Calu3 (cell line): ENCODE measurements at regions of chr9 and their contacts with region 1.

Region 1: GRCh38 chr9:105425841-105426436 is 21.9 kb upstream of the FSD1L start:
- DNase-seq: no peak
- H3K4me3 Mint-ChIP-seq: no peak overlapping the region
- H3K27ac Mint-ChIP-seq: no peak overlapping the region
- H3K4me1 Mint-ChIP-seq: no peaks in the 10 kb centered on the region
- H3K27me3 Mint-ChIP-seq: no peaks in the 10 kb centered on the region
- CTCF ChIP-seq: no peak

Region 2: GRCh38 chr9:105475302-105475701 is 49.4 kb after region 1 on chr9:
- CTCF ChIA-PET with region 1: no interaction called
- intact Hi-C with region 1: loop called (anchors 2 kb)
- DNase-seq: no peak
- H3K4me3 Mint-ChIP-seq: no peak overlapping the region
- H3K27ac Mint-ChIP-seq: no peak overlapping the region
- H3K4me1 Mint-ChIP-seq: no peaks in the 10 kb centered on the region
- H3K27me3 Mint-ChIP-seq: no peaks in the 10 kb centered on the region
- CTCF ChIP-seq: no peak

Region 3: GRCh38 chr9:105712773-105713172 is 286.8 kb after region 1 on chr9:
- CTCF ChIA-PET with region 1: no interaction called
- intact Hi-C with region 1: loop called (anchors 10 kb)
- DNase-seq: no peak
- H3K4me3 Mint-ChIP-seq: no peak overlapping the region
- H3K27ac Mint-ChIP-seq: no peak overlapping the region
- H3K4me1 Mint-ChIP-seq: no peaks in the 10 kb centered on the region
- H3K27me3 Mint-ChIP-seq: no peaks in the 10 kb centered on the region
- CTCF ChIP-seq: no peak